AG04449 (cell line): ENCODE measurements at regions of chr5 and their contacts with region 1.

Region 1: DNA sequence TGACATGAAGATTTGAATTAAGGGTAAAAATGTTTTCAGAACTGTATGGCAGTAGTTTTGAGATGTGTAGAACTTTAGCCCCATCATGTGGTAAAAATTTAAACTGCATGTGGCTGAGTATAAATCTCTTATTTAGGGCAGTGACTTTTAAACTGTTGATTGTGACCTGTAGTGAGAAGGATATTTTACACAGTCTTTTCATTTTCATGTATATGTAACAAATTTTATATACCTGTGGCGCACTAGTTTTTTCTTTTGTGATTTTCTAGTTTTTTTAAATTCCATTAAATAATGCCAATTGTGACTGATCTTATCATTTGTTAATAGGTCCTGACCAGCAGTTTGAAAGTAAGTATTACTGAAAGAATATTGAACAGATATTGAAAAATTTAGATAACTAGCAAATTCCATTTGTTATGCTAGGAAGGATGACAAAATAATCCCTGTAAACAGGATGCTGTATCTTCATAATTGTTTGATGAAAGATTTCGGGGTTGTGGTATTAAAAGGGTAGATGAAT is 47.2 kb downstream of the GPBP1 start:
- DNase-seq: no peak
- H3K4me3 ChIP-seq: no peak overlapping the region
- CTCF ChIP-seq: peak; percentile 46

Region 2: GRCh38 chr5:57137401-57137800 is 83.7 kb before region 1 on chr5:
- CTCF ChIA-PET with region 1: interaction called, 11 read pairs
- POLR2A ChIA-PET with region 1: no interaction called
- DNase-seq: no peak
- H3K4me3 ChIP-seq: no peak overlapping the region
- CTCF ChIP-seq: no peak